ENCODE measurements at regions of chr13 and their contacts with region 1.

Region 1: DNA sequence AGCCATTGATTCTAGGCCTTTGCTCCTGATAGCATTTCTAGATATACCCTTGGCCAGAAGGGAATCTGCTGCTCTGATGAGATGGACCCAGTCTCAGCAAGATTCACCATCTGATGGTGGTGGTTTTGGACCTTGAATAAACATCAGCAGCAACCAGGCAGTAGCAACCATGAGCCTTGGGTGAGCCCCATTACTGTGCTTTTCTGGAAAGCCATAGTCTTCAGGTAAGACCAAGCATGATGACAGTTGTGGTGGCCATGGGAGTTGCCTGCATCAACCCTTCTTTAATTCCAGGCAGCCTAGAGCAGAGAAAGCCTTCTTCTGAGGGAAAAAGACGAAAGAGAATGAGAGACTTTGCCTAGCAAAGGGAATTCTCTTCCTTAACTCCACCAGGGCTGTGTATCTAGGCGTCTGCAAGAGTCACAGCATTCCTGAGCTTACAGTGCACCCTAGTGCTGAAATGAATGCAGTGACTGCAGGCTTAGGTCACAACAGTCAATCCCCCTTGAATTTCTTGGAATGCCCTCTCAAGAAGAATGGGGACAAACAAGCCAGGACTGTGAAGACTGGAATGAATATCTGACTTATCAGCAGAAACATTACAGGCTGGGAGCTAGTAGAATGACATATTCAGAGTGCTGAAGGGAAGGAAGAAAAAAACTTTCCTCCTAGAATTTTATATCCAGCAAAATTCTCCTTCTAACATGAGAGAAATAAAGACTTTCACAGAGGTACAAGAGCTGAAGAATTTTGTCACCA is 942.4 kb upstream of the PCDH20 start:
- DNase-seq: peak; percentile 71
- ATAC-seq: peak; percentile 97
- H3K4me3 ChIP-seq: no peak overlapping the region
- H3K27ac ChIP-seq: no peak overlapping the region
- H3K4me1 ChIP-seq: peaks cover 3% of the 10 kb centered on the region; the same call in 1 of the 2 replicates
- H3K27me3 ChIP-seq: no peaks in the 10 kb centered on the region
- CTCF ChIP-seq: peak; percentile 69
- POLR2A ChIP-seq: no peak
- RAD21 ChIP-seq: peak; percentile 87

Region 2: GRCh38 chr13:61765181-61765742 is 592.8 kb before region 1 on chr13:
- CTCF ChIA-PET with region 1: no interaction called
- POLR2A ChIA-PET with region 1: no interaction called
- dilution Hi-C with region 1: no loop called
- in situ Hi-C with region 1: no loop called
- intact Hi-C with region 1: no loop called
- DNase-seq: no peak
- ATAC-seq: no peak
- H3K4me3 ChIP-seq: no peak overlapping the region
- H3K27ac ChIP-seq: no peak overlapping the region
- H3K4me1 ChIP-seq: no peaks in the 10 kb centered on the region
- H3K27me3 ChIP-seq: no peaks in the 10 kb centered on the region
- CTCF ChIP-seq: no peak
- POLR2A ChIP-seq: no peak
- RAD21 ChIP-seq: no peak

Region 3: DNA sequence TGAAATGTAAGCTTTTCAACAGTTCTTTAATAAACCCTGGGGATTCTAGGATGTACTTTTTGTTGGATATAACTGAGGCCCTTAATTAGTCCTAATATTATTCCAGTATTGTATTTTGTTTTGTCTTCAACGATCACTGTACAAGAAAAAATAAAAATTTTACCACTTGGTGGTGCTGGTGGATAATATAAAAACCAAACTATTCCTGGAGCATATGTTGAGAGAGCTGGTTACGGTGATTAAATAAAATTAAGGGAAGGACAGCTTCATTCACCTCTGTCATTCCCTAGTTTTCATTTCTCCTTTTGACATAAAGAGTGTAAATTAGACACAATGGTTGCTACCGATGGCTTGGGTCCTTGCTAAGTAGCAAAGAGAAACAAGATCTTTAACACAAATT is 343.8 kb before region 1 on chr13:
- CTCF ChIA-PET with region 1: no interaction called
- POLR2A ChIA-PET with region 1: no interaction called
- dilution Hi-C with region 1: no loop called
- in situ Hi-C with region 1: no loop called
- intact Hi-C with region 1: loop called (anchors 1 kb)
- DNase-seq: peak; percentile 1
- ATAC-seq: no peak
- H3K4me3 ChIP-seq: no peak overlapping the region
- H3K27ac ChIP-seq: no peak overlapping the region
- H3K4me1 ChIP-seq: no peaks in the 10 kb centered on the region
- H3K27me3 ChIP-seq: no peaks in the 10 kb centered on the region
- CTCF ChIP-seq: no peak
- POLR2A ChIP-seq: no peak
- RAD21 ChIP-seq: no peak

Region 4: DNA sequence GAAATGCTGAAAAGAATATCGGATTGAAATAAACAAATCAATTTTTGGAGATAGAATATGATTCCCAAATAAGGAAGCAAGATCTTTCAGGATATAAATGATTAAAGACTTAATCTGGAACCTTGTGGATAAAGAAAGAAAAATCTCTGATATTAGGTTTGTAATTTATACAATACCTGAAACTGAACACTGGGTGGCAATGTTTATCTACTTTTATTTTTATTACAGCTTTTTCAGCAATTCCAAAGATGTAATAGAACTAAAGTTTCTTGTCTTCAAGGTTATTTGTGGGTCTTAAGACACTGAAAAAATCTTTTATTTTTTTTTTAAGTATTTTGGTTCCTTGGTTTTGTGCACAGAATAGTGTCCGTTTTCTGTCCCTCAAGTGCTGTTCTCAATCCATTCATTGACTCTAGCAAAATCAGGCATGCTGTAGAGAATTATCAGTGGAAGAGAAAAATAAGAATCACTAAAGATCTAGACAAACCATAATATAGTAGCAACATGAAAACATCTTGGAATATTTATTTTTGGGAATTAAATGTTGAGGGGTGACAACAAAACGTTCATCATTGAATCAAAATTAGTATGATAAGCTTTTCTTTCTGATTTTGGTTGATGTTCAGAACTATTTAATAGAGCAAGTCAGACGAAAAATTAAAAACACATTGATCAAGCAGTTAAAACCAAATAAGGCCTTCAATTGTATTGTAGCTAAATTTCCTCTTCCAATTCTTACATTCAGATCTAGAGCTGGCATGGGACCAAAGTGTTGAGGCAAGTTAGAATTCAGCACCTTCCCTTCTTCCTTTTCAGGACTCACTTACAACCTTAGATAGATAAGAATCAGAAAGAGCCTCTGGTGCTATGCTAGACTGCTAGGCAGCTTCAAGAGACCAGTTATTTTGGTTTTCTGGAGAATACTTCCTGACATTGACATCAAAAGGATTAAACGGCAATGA is 238.0 kb before region 1 on chr13:
- CTCF ChIA-PET with region 1: interaction called, 4 read pairs
- POLR2A ChIA-PET with region 1: no interaction called
- dilution Hi-C with region 1: no loop called
- in situ Hi-C with region 1: loop called (anchors 10 kb)
- intact Hi-C with region 1: loop called (anchors 1 kb)
- DNase-seq: peak; percentile 17
- ATAC-seq: peak; percentile 51; the same call in 1 of the 2 replicates
- H3K4me3 ChIP-seq: no peak overlapping the region
- H3K27ac ChIP-seq: no peak overlapping the region
- H3K4me1 ChIP-seq: no peaks in the 10 kb centered on the region
- H3K27me3 ChIP-seq: no peaks in the 10 kb centered on the region
- CTCF ChIP-seq: peak; percentile 42
- POLR2A ChIP-seq: no peak
- RAD21 ChIP-seq: peak; percentile 44

Region 5: DNA sequence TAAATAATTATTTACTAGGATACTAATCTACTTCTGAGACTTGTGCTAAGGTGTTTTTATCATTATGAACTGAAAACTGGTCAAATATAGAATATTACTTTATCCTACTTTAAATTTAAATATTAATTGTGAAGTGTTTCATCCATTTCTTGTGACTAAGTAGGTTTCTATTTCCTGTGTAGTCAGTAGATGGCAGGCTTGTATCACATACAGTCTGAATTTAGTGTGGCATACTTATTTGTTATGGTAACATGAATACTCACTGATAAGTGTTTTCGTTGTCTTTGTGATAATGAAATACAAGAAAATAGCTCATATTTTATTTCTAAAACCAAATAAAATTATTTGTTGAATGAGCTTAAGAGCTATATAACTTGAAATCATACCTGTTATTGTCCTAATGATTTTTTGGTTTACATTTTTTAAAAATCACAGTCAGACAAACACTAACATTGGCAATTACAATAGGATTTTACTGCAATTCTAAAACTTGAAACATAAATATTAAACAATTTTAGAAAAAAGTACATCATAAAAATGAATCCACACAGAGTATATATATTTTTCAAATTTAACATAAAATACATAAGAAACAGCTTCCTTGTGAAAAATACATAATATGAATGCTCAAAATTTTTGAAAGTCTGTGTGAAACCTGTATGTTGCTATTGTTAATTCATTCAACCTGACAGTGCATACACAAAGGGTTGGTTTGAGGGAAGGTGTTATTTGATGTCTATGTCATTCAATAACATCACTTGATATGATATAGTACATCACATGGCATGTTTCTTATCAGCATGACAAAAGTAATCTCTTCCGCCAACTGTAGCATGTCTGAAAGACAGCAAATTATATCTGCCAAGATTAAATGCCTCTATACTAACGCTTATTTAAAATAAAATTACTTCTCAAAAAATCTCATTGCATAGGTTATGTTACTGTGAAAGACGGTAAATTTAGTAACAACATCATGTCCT is 37.6 kb before region 1 on chr13:
- CTCF ChIA-PET with region 1: no interaction called
- POLR2A ChIA-PET with region 1: no interaction called
- dilution Hi-C with region 1: no loop called
- in situ Hi-C with region 1: no loop called
- intact Hi-C with region 1: loop called (anchors 2 kb)
- DNase-seq: peak; percentile 75
- ATAC-seq: peak; percentile 80
- H3K4me3 ChIP-seq: no peak overlapping the region
- H3K27ac ChIP-seq: no peak overlapping the region
- H3K4me1 ChIP-seq: no peaks in the 10 kb centered on the region
- H3K27me3 ChIP-seq: no peaks in the 10 kb centered on the region
- CTCF ChIP-seq: peak; percentile 86
- POLR2A ChIP-seq: no peak
- RAD21 ChIP-seq: peak; percentile 82